Endothelial cell of umbilical vein (primary cell): ENCODE measurements at regions of chr9 and their contacts with region 1.

Region 1: GRCh38 chr9:14030375-14031059 is 283.4 kb downstream of the NFIB start:
- DNase-seq: peak; percentile 97
- H3K4me3 ChIP-seq: peak overlapping the region in 2 of 3 experiments; percentile 25 to 46
- H3K27ac ChIP-seq: peak overlapping the region; percentile 88
- H3K4me1 ChIP-seq: peaks cover 44% of the 10 kb centered on the region
- H3K27me3 ChIP-seq: no peaks in the 10 kb centered on the region
- CTCF ChIP-seq: no peak
- POLR2A ChIP-seq: peak; percentile 31

Region 2: DNA sequence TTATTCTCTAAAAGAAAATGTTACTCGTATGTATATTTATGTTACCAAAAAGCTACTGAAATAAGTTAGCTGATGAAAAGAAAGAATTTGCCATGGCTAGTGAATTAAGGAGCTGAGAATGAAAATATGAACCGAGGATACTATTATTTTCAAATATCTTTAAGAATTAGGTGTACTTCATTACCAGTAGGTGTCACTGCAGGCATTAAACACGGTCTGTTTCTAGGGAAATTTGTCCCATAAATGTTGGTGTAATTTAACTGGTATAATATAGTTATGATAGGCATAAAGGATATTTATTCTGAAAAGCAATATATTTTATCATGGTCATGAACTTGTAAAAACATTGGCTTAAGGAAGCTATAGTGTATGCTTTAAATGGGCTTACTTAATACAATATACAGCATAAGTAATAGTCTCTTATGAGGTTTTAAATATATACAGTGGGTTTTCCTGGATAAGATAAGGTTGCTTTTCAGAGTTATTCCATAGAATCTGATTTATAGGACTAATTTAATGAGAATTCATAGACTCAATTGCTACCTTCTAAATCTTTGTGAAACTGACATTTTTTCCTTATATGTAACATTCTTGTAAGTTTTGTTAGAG is 678.6 kb before region 1 on chr9:
- CTCF ChIA-PET with region 1: no interaction called
- POLR2A ChIA-PET with region 1: no interaction called
- dilution Hi-C with region 1: no loop called
- intact Hi-C with region 1: loop called (anchors 5 kb)
- DNase-seq: peak; percentile 74
- H3K4me3 ChIP-seq: no peak overlapping the region
- H3K27ac ChIP-seq: no peak overlapping the region
- H3K4me1 ChIP-seq: no peaks in the 10 kb centered on the region
- H3K27me3 ChIP-seq: no peaks in the 10 kb centered on the region
- CTCF ChIP-seq: peak; percentile 32 to 37
- POLR2A ChIP-seq: no peak

Region 3: DNA sequence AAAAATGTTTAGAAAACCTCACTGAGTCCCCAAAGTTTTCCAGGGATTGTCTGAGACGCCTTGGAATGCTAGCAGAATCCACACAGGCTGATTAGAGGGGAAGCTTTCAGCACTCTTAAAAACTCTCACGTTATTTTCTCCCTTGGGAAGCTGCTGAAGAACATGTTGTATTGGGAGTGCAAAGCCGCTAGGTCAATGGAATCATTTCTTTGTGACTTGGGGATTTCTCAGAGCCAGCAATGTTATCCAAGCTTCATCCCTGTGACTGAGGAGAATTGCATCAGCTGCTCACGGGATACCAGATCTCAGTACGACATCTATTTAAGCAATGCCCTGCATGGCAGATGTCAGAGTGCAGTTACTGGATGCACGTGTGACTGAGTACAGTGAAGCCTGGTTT is 324.6 kb before region 1 on chr9:
- CTCF ChIA-PET with region 1: no interaction called
- POLR2A ChIA-PET with region 1: no interaction called
- dilution Hi-C with region 1: no loop called
- intact Hi-C with region 1: loop called (anchors 2 kb)
- DNase-seq: peak; percentile 81
- H3K4me3 ChIP-seq: no peak overlapping the region
- H3K27ac ChIP-seq: peak overlapping the region; percentile 80
- H3K4me1 ChIP-seq: peaks cover 39% of the 10 kb centered on the region
- H3K27me3 ChIP-seq: no peaks in the 10 kb centered on the region
- CTCF ChIP-seq: no peak
- POLR2A ChIP-seq: no peak

Region 4: DNA sequence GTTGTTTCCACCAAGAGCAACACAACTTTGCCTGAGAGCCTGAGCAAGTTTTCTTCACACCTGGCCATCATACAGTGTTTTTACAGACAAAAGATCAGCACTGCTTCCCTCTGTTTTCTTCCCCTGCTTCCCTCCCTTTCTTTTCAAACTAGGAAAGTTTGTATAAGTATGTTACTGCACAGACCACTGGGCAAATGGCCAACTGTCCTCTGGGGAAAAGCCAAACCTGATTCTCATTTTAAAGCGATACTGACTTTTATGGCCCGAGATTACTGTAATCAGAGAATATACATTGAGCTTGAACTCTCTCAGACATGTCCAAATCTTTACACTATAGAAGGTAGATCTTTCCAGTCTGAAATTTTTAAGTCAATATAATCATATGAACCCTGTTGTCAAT is 131.6 kb before region 1 on chr9:
- CTCF ChIA-PET with region 1: no interaction called
- POLR2A ChIA-PET with region 1: no interaction called
- dilution Hi-C with region 1: no loop called
- intact Hi-C with region 1: loop called (anchors 5 kb)
- DNase-seq: peak; percentile 83
- H3K4me3 ChIP-seq: no peak overlapping the region
- H3K27ac ChIP-seq: no peak overlapping the region
- H3K4me1 ChIP-seq: peaks cover 31% of the 10 kb centered on the region
- H3K27me3 ChIP-seq: no peaks in the 10 kb centered on the region
- CTCF ChIP-seq: no peak
- POLR2A ChIP-seq: no peak

Region 5: GRCh38 chr9:14198841-14199455 is 168.4 kb after region 1 on chr9:
- CTCF ChIA-PET with region 1: no interaction called
- POLR2A ChIA-PET with region 1: no interaction called
- dilution Hi-C with region 1: no loop called
- intact Hi-C with region 1: loop called (anchors 10 kb)
- DNase-seq: peak; percentile 62
- H3K4me3 ChIP-seq: no peak overlapping the region
- H3K27ac ChIP-seq: peak overlapping the region; percentile 59
- H3K4me1 ChIP-seq: peaks cover 60% of the 10 kb centered on the region
- H3K27me3 ChIP-seq: no peaks in the 10 kb centered on the region
- CTCF ChIP-seq: no peak
- POLR2A ChIP-seq: no peak